GM10248 (cell line): ENCODE measurements at regions of chr18 and their contacts with region 1.

Region 1: DNA sequence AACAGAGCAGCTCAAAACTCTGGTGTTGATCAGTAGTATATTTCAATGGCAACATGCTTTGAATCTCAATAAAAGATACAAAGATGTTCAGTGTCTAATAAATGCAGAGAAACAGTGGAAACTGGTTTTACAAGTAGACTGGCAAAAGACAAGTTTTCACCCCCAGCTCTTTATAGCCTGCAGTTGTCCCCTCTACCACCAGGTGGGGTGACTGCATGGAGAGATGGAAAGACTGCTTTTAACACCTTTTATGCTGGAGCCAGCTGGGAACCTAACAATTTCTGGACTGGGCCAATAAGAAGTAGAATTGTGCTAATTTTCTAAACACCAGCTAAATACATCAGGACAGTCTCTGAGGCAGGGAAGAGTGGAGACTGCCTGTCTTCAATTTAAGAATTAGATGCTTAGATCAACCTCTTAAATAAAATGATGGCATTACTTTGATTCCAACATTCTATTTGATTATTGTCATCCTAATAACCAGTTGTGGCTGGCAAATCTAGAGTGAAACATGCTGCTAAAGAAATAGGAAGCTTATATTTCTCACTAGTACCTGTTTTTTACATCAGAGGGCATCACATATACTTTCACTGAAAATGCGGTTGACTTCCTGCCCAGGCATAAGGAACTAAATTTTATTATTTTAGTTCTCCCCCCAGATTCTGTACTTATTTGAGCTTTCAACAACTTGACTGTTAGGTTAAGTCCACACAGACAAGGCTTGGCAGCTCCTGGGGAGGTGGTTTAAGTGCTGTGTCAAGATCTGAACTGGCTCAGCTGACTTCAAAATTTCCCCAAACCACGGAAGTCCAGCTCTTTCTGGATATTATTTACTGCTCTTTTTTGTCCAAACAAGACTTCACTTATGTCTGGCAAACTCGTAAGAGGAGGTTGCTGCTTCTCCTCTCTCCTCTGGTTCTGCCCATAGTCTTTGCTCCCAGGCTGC is 140.5 kb downstream of the TPGS2 start:
- DNase-seq: peak; percentile 64
- CTCF ChIP-seq: peak; percentile 76

Region 2: DNA sequence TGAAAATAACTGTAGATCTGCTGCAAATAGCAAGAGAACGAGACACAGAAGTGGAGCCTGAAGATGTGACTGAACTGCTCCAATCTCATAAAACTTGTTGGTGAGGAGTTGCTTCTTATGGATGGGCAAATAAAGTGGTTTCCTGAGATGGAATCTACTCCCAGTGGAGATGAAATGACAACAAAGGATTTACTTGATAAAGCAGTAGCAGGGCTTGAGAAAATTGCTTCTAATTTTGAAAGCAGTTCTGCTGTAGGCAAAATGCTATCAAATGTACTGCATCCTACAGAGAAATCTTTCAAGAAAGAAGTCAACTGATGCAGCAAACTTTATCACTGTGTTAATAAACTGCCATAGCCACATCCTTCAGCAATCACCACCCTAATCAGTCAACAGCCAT is 665.0 kb before region 1 on chr18:
- CTCF ChIA-PET with region 1: no interaction called
- POLR2A ChIA-PET with region 1: no interaction called
- DNase-seq: no peak
- CTCF ChIP-seq: no peak

Region 3: GRCh38 chr18:36545821-36546427 is 142.4 kb before region 1 on chr18:
- CTCF ChIA-PET with region 1: no interaction called
- POLR2A ChIA-PET with region 1: no interaction called
- DNase-seq: no peak
- CTCF ChIP-seq: no peak

Region 4: GRCh38 chr18:36635414-36636096 is 52.7 kb before region 1 on chr18:
- CTCF ChIA-PET with region 1: interaction called, 14 read pairs
- POLR2A ChIA-PET with region 1: no interaction called
- DNase-seq: peak; percentile 33
- CTCF ChIP-seq: no peak

Region 5: GRCh38 chr18:36672437-36673344 is 15.6 kb before region 1 on chr18:
- CTCF ChIA-PET with region 1: interaction called, 17 read pairs
- POLR2A ChIA-PET with region 1: no interaction called
- DNase-seq: no peak
- CTCF ChIP-seq: no peak

Region 6: GRCh38 chr18:36711813-36712444 is 23.6 kb after region 1 on chr18:
- CTCF ChIA-PET with region 1: interaction called, 21 read pairs
- POLR2A ChIA-PET with region 1: no interaction called
- DNase-seq: no peak
- CTCF ChIP-seq: no peak

Region 7: DNA sequence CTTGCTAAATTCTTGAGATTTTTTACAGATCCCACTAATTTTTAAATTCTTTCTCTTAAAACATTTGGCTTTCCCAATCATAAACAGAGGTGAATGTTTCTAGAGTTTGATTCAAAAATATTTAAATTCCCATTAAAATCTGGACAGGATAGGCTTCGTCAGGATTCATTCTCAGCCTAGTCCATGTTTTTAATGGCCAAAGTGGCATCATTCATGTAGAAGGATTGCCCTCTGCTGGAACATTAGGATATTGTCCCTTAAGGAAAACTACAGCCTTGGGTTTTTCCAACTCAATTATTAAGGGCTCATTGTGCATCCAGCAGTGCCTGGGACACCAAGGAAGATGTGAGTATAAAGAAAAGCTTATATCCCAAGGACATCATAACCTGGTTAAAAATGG is 68.8 kb after region 1 on chr18:
- CTCF ChIA-PET with region 1: interaction called, 11 read pairs
- POLR2A ChIA-PET with region 1: no interaction called
- DNase-seq: no peak
- CTCF ChIP-seq: peak; percentile 38